Activated CD4-positive, alpha-beta T cell treated with anti-CD3 and anti-CD28 coated beads, Interleukin-2, amount 10 ng/mL, durations not matched to agents 24 days and 14 days (primary cell): ENCODE measurements at regions of chr10 and their contacts with region 1.

Region 1: DNA sequence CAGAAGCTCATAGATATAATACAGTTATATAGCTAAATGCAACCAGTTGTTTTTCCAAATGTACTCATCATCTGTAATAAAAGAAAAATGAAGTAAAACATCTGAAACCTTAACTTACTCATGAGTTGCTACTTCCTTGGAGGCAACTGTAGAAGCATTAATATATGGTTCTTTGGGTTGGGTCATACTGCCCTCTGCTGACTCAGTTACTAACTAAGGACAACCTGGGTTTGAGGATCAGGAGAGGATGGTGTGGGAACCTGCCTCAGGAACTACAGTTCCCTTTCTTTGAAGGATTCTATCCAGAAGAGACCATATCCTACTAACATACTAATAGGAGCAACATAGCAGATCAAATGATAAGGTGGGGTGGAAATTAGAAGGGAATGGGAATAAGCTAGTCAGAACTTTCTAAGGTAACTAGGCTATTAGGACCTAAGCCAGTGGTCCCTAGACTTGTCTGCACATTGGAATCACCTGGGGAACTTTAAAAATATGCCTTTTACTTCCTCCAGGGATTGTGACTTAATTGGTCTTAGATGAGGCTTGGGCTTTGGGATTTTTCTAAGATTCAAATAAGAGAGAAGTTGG is 20.7 kb downstream of the COX15 start:
- DNase-seq: peak; percentile 81
- H3K4me3 Mint-ChIP-seq: no peak overlapping the region
- H3K27ac Mint-ChIP-seq: no peak overlapping the region
- H3K4me1 Mint-ChIP-seq: peaks cover 6% of the 10 kb centered on the region
- H3K27me3 Mint-ChIP-seq: no peaks in the 10 kb centered on the region

Region 2: GRCh38 chr10:99395750-99396445 is 315.3 kb before region 1 on chr10:
- intact Hi-C with region 1: loop called (anchors 1 kb)
- DNase-seq: no peak
- H3K4me3 Mint-ChIP-seq: no peak overlapping the region
- H3K27ac Mint-ChIP-seq: peak overlapping the region; percentile 20
- H3K4me1 Mint-ChIP-seq: peaks cover 8% of the 10 kb centered on the region
- H3K27me3 Mint-ChIP-seq: peaks cover 2% of the 10 kb centered on the region

Region 3: DNA sequence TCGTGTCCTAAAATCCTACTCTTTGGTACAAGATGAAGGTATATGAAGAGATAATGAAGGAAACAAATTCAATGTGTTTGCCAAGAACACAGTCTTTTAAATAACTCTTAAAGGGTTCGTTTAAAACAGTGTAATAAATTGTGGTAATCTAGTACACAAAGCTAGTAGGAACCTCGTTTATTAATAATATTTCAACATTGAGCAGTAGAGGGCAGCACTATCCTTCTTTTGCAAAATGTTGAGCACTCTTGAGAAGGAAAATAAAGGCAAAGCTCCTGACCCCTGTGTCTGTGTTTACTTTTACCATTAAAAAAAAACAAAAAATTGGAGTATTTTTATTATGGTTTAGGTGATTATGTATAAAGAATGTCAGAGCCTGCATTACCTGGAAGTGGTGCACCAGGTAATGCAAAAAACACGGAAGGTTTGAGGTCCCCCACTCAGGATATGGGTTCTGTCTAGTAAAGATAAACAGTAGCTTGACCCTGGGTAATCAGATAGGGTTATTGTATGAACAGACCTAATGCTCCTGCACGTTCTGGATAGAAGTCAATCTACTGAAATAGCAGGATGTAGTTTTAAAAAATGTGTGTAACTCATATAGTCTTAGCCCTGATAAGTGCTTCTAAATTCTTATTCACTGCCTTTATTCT is 275.1 kb before region 1 on chr10:
- intact Hi-C with region 1: loop called (anchors 1 kb)
- DNase-seq: no peak
- H3K4me3 Mint-ChIP-seq: no peak overlapping the region
- H3K27ac Mint-ChIP-seq: no peak overlapping the region
- H3K4me1 Mint-ChIP-seq: peaks cover 18% of the 10 kb centered on the region
- H3K27me3 Mint-ChIP-seq: no peaks in the 10 kb centered on the region

Region 4: DNA sequence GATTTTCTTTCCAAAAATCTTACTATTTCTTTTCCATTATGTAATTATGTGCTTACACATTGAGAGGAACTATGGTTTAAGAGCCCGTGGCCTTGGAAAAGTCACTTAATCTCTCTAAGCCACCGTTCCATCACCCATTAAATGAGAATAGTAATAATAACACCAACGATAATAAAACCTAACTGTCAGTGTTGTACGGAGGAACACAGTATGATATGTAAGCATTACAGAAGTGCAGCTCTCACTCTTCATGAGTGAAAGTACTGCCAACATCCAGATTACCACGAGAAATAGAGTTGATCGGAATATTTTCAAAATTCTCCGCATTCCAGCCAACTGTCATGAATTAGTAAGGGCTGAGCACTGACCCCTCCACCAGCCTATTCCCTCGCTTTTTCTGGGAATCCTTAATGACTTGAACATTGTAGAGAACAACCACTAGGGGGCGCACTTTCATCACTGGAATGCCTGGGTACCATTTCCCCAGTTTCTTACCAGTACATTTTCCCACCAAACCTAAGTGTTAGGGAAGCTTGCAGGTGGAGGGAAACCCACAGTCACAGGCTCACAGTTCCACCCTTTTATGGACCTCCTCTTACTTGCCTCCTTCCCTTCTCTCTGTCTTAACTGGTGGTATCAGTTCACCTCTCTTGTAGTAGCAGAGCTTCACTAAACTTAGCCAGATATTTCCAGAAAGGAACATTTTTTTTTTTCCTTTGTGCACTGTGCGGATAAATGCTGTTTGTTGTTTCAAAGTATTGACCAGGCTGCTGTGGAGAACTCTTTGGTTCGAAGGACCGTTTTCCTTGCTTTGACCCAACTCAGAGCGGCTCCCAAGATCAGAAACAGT is 150.7 kb before region 1 on chr10:
- intact Hi-C with region 1: loop called (anchors 1 kb)
- DNase-seq: peak; percentile 82
- H3K4me3 Mint-ChIP-seq: no peak overlapping the region
- H3K27ac Mint-ChIP-seq: no peak overlapping the region
- H3K4me1 Mint-ChIP-seq: peaks cover 7% of the 10 kb centered on the region
- H3K27me3 Mint-ChIP-seq: peaks cover 26% of the 10 kb centered on the region

Region 5: DNA sequence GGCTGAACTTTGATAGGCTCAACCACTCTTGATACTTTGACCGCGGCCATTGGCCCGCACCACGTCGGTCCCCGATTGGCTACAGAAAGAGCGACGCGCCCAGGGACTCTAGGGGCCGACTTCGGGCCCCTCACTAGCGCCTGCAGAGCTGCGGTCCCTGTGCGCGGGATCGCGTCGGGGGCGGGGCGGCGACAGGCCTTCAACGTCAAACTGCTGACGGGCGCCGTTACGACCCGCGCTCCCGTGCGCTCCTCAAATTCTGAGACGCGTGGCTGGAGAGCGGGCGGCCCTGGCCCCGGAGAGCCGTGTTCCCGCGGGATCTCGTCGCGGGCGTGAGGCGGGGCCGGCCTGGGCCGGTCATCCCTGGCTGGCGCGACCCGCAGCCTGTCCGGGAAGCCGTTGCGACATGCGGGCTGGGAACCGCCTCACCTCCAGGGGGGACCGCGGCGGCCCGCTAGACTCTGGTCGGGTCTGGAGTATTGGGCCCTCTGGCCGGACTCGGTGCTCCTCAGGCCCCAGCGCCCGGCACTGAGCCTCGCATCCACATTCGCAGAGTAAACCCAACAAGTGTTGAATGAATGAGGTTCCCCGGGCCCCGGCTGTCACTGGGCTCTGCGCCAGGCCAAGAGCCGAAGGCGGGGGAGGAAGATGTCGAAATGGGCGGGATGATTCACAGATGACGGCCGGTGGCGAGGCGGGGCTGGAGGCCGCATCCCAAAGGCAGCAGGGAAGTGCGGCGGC is 90.3 kb before region 1 on chr10:
- intact Hi-C with region 1: loop called (anchors 2 kb)
- DNase-seq: peak; percentile 97
- H3K4me3 Mint-ChIP-seq: peak overlapping the region; percentile 92
- H3K27ac Mint-ChIP-seq: peak overlapping the region; percentile 96
- H3K4me1 Mint-ChIP-seq: peaks cover 35% of the 10 kb centered on the region
- H3K27me3 Mint-ChIP-seq: no peaks in the 10 kb centered on the region

Region 6: DNA sequence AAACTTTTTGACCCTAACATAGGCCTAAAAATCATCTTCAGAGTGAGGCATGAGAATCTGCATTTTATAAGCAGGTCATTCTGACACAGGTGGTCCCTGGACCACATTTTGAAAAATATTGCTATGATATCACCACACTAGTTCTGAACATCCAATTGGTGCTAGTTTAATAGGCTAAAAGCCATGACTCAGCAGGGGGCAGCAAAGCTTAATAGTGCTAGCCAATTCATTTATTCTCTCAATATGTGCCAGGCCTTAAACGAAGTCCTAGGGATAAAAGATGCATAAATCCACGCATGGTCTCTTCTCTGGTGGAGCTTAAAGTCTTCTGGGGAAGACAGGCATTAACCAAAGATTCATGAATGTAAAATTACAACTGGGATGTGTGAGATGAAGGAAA is 80.8 kb before region 1 on chr10:
- intact Hi-C with region 1: loop called (anchors 2 kb)
- DNase-seq: peak; percentile 66
- H3K4me3 Mint-ChIP-seq: no peak overlapping the region
- H3K27ac Mint-ChIP-seq: no peak overlapping the region
- H3K4me1 Mint-ChIP-seq: peaks cover 4% of the 10 kb centered on the region
- H3K27me3 Mint-ChIP-seq: peaks cover 35% of the 10 kb centered on the region

Region 7: GRCh38 chr10:99672884-99673283 is 38.3 kb before region 1 on chr10:
- intact Hi-C with region 1: loop called (anchors 5 kb)
- DNase-seq: no peak
- H3K4me3 Mint-ChIP-seq: no peak overlapping the region
- H3K27ac Mint-ChIP-seq: no peak overlapping the region
- H3K4me1 Mint-ChIP-seq: peaks cover 5% of the 10 kb centered on the region
- H3K27me3 Mint-ChIP-seq: no peaks in the 10 kb centered on the region